ENCODE measurements at regions of chr12 and their contacts with region 1.

Region 1: GRCh38 chr12:92570056-92570753 is 132.6 kb upstream of the PLEKHG7 start:
- DNase-seq: peak; percentile 75
- H3K4me3 Mint-ChIP-seq: no peak overlapping the region
- H3K27ac Mint-ChIP-seq: no peak overlapping the region
- H3K4me1 Mint-ChIP-seq: no peaks in the 10 kb centered on the region
- H3K27me3 Mint-ChIP-seq: no peaks in the 10 kb centered on the region
- CTCF ChIP-seq: peak; percentile 79

Region 2: DNA sequence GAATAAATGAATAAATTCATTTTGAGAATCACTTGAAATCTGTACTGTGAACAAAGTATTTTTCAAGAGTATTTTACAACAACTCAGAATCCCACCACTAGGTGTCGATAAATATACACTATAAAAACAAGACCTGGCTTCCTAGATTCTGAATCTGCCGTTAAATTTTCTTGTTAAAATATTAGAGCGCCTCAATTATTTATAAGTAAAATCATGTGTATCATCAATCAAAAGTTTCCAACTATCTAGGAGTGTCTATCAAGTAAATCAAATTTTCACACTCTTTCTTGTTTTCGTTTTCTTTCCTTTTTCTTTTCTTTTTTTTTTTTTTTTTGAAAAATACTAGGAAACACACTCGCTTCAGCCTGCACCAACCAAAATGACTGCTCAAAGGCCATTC is 1208.3 kb before region 1 on chr12:
- CTCF ChIA-PET with region 1: no interaction called
- intact Hi-C with region 1: loop called (anchors 5 kb)
- DNase-seq: no peak
- H3K4me3 Mint-ChIP-seq: peak overlapping the region; percentile 8
- H3K27ac Mint-ChIP-seq: no peak overlapping the region
- H3K4me1 Mint-ChIP-seq: peaks cover 26% of the 10 kb centered on the region
- H3K27me3 Mint-ChIP-seq: no peaks in the 10 kb centered on the region
- CTCF ChIP-seq: peak; percentile 58

Region 3: GRCh38 chr12:91811481-91812287 is 758.5 kb before region 1 on chr12:
- CTCF ChIA-PET with region 1: no interaction called
- intact Hi-C with region 1: loop called (anchors 2 kb)
- DNase-seq: peak; percentile 82
- H3K4me3 Mint-ChIP-seq: no peak overlapping the region
- H3K27ac Mint-ChIP-seq: no peak overlapping the region
- H3K4me1 Mint-ChIP-seq: no peaks in the 10 kb centered on the region
- H3K27me3 Mint-ChIP-seq: no peaks in the 10 kb centered on the region
- CTCF ChIP-seq: peak; percentile 90

Region 4: DNA sequence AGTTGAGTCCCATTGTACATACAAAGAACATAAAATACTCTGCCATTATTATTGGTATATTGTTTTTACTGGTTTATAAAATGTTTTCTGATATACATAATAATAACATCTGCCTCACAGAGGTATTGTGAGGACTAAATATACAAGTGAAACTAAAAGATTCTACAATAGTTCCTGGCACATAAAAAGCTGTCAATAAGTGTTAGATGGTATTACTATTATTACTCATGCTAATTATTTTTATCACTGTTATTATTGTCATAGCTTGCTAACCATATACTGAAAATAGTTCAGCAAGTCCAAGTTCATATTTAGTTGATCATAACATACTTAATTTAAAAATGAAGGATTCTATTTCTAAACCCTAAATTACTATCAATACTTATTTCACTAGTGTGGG is 458.9 kb before region 1 on chr12:
- CTCF ChIA-PET with region 1: no interaction called
- intact Hi-C with region 1: no loop called
- DNase-seq: no peak
- H3K4me3 Mint-ChIP-seq: no peak overlapping the region
- H3K27ac Mint-ChIP-seq: no peak overlapping the region
- H3K4me1 Mint-ChIP-seq: peaks cover 60% of the 10 kb centered on the region
- H3K27me3 Mint-ChIP-seq: no peaks in the 10 kb centered on the region
- CTCF ChIP-seq: no peak

Region 5: GRCh38 chr12:92259852-92260251 is 310.4 kb before region 1 on chr12:
- CTCF ChIA-PET with region 1: no interaction called
- intact Hi-C with region 1: loop called (anchors 5 kb)
- DNase-seq: no peak
- H3K4me3 Mint-ChIP-seq: no peak overlapping the region
- H3K27ac Mint-ChIP-seq: no peak overlapping the region
- H3K4me1 Mint-ChIP-seq: peaks cover 19% of the 10 kb centered on the region
- H3K27me3 Mint-ChIP-seq: no peaks in the 10 kb centered on the region
- CTCF ChIP-seq: no peak

Region 6: DNA sequence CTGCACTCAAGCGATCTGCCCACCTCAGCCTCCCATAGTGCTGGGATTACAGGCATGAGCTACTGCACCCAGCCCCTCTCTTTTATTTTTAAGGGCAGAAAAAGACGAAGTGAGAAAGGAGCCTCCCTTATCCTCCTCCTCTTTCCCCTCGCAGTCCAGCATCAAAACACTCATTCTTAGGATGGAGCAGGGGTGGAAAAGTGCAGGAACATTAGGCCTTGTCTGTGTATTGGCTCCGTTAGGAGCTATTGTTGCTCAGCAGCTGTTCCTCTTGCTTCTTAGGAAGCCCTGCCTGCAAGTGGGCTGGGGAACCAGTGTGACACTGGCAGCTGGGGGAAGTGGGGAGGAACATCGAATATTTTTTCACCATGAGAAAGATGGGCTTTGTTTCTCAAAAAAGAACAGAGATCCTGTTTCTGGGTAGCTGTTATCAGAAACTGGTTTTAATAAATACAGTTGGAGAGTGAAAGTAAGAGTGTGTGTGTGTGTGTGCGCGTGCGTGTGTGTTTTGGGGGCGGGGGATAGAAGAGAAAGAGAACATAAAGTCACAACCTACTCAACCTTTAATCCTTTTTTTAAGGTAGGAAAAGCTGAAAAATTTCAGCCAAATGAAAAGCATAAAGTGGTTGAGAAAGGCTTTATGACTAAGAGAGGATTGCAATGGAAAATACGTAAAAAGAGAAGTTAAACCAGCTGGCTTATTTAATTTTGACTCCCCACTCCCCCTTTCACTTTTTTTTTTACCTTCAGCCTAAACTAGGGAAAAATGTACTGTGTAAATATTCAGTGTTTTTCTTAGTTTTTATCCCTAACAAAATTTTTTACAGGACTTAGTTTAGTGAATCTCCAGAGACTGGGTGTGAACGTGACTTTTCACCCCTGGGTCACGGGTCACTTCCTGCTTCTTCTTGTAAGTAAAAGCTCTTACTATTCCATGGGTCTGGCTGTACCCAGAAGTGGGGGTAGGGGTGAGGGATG is 64.7 kb before region 1 on chr12:
- CTCF ChIA-PET with region 1: interaction called, 26 read pairs
- intact Hi-C with region 1: loop called (anchors 1 kb)
- DNase-seq: peak; percentile 27
- H3K4me3 Mint-ChIP-seq: peak overlapping the region; percentile 53
- H3K27ac Mint-ChIP-seq: peak overlapping the region; percentile 62
- H3K4me1 Mint-ChIP-seq: peaks cover 48% of the 10 kb centered on the region
- H3K27me3 Mint-ChIP-seq: no peaks in the 10 kb centered on the region
- CTCF ChIP-seq: no peak

Region 7: GRCh38 chr12:92551853-92552397 is 18.3 kb before region 1 on chr12:
- CTCF ChIA-PET with region 1: no interaction called
- intact Hi-C with region 1: no loop called
- DNase-seq: peak; percentile 48
- H3K4me3 Mint-ChIP-seq: no peak overlapping the region
- H3K27ac Mint-ChIP-seq: no peak overlapping the region
- H3K4me1 Mint-ChIP-seq: peaks cover 33% of the 10 kb centered on the region
- H3K27me3 Mint-ChIP-seq: no peaks in the 10 kb centered on the region
- CTCF ChIP-seq: no peak

Region 8: DNA sequence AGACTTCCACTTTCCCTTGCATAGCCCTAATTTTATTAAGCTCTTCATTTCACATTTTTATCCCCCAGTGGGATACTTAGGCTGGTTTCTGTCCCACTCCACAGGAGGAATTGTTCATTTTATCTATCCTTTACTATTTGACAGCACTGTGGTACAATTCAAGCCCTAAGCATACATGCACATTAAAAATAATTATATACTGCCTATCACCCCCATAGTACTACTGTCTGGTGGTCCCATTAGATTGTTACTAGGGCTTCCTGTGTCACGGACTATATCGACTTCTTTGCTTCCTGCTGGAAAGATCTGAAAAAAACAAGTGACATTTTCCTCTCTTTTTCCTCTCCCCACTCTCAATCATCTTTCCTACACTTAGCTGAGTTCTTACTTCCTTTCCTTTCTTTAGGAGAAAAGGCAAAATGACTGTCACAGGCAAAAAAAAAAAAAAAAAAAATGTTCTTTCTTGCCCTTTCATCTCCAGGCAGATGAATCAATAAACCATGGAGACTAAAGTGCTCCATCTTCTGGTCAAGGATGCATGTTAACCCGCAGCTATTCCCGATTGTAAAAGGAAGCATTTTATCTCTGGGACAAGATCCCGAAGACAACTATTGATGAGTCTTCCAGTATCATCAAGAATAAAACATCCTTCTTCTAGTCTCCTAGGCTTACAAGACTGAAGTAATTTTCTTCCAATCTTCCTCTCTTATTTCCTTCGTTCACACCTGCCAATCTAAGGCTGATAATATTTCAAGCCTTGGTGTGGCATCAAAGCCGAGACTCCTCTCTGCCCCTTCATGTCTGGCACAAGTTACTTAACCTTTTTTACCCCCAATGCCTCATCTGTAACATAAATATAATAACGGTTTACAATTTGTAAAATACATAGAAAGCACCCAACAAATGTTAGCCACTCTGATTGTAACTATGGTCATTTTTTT is 38.2 kb after region 1 on chr12:
- CTCF ChIA-PET with region 1: interaction called, 8 read pairs
- intact Hi-C with region 1: loop called (anchors 1 kb)
- DNase-seq: peak; percentile 13
- H3K4me3 Mint-ChIP-seq: no peak overlapping the region
- H3K27ac Mint-ChIP-seq: peak overlapping the region; percentile 65
- H3K4me1 Mint-ChIP-seq: peaks cover 37% of the 10 kb centered on the region
- H3K27me3 Mint-ChIP-seq: no peaks in the 10 kb centered on the region
- CTCF ChIP-seq: peak; percentile 34